ENCODE measurements at regions of chr22 and their contacts with region 1.

Region 1: GRCh38 chr22:35430897-35431322 is 31.0 kb downstream of the MCM5 start:
- DNase-seq: peak; percentile 91
- ATAC-seq: peak; percentile 98

Region 2: GRCh38 chr22:35622191-35622913 is 191.4 kb after region 1 on chr22:
- intact Hi-C with region 1: loop called (anchors 2 kb)
- DNase-seq: peak; percentile 79
- ATAC-seq: peak; percentile 64

Region 3: DNA sequence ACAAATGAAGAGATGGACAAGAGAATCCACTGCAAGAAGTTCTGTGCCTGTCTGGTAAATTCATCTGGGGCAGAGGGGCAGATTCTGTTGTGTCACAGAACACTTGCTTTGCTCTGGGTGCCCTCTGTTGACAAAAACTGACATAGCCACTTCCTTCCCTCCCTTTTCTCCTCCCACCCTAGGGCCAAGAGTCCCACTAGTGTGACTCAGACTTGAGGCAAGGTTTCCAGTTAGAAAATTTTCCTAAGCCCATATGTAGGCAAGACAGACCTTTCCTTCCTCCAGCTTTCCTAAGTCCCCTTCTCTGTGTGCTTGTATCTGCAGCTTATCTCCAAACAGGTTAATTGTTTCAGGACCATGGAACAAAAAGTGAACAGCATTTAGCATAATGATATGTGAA is 490.9 kb after region 1 on chr22:
- intact Hi-C with region 1: loop called (anchors 5 kb)
- DNase-seq: no peak
- ATAC-seq: peak; percentile 88